Psoas muscle (tissue), 8 donors: ENCODE measurements at regions of chr3 and their contacts with region 1.

Region 1: DNA sequence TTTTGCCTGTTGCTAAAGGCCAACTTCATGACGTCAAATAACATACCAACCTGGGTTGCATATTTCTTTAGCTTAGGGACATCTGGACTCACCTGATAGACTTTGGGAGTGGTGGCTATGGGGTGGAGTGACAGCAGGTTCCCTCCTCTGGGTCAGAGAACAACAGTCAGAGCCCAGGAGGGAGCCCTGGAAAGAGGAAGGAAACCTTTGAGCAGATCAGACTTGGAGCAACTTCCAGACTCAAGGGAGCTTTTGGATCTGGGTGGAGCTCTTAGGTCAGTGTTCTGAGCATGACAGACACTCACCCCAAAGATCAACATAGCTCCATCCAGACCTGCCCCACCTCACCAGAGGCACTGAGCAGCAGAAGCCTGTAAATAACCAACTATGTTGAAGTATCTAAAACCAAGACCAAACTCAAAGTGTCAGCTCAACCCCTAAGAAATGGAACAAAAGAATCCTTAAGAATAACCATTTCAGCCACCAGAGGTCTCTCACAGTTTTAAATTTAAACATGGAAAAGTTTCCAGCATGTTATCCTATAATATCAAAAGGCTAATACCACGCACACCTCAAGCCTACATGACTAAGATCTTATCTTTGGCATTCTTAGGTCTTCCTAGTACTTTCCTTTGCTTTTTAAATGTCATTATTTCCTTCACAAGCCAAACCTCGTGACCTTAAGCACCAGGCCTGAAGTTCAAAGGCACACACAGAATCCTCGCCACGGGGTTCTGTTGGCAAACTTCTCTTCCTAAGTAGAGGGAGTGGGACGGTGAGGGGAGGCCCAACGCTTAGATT is 56.4 kb downstream of the UMPS start:
- DNase-seq: no peak
- ATAC-seq: peak in 1 of 4 donors; percentile 69
- H3K4me3 ChIP-seq: no peak overlapping the region
- H3K27ac ChIP-seq: peak overlapping the region; percentile 28
- H3K4me1 ChIP-seq: peaks cover 34% of the 10 kb centered on the region
- H3K27me3 ChIP-seq: peaks cover 0 to 1% (median 0%) of the 10 kb centered on the region in 3 donors
- CTCF ChIP-seq: peak; percentile 31

Region 2: GRCh38 chr3:124741027-124741426 is 45.6 kb before region 1 on chr3:
- intact Hi-C with region 1: no loop called
- DNase-seq: no peak
- ATAC-seq: peak; percentile 31 to 54 (median 39)
- H3K4me3 ChIP-seq: no peak overlapping the region
- H3K27ac ChIP-seq: no peak overlapping the region
- H3K4me1 ChIP-seq: peaks cover 7% of the 10 kb centered on the region
- H3K27me3 ChIP-seq: no peaks in the 10 kb centered on the region
- CTCF ChIP-seq: no peak

Region 3: DNA sequence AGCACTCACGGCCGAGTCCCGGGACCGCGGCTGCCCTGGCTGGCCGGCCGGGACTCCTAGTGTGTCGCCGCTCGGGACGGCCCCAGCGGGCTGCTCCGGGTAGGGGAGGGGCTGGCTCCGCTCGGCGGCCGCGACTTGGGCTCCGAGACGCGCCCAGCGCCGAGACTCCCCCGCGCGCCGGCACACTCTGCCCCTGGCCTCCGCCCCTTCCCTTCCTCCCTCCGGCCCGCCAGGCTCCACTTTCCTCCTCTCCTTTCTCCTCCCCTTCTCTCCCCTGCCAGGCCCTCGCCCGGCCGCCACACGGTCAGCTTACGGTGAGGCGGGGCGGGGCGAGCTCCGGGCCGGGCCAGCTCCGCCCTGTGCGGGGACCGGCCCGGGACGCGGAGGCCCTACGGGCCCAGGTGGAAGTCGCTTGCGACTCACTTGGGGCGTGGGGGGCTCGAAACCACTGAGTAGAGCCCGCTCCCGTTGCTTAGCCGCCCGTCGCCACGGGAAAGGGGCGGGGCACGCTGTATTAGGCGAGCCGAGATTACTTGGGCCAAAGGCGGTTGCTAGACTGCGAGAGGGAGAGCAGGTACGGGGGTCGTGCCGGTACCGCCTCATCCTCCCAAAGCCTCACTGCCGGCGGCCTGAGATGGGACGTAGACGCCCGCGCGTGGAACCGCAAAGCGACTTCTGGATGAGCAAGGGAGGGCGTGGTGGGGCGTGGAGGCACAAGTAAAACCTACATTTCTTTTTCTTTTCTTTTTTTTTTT is 100.7 kb after region 1 on chr3 and contains the start of gene ITGB5:
- intact Hi-C with region 1: loop called in 1 of 2 experiments (anchors 1 kb)
- DNase-seq: peak; percentile 87 to 90
- ATAC-seq: peak; percentile 87 to 94 (median 90)
- H3K4me3 ChIP-seq: peak within 1 kb of the TSS; percentile 91
- H3K27ac ChIP-seq: peak within 1 kb of the TSS; percentile 92
- H3K4me1 ChIP-seq: peaks cover 14% of the 10 kb centered on the region
- H3K27me3 ChIP-seq: no peaks in the 10 kb centered on the region
- CTCF ChIP-seq: no peak
- total RNA-seq, gene ITGB5: 37.5 to 61.5 (median 54.8) TPM